Left colon (tissue), 2 donors: ENCODE measurements at regions of chr7 and their contacts with region 1.

Region 1: GRCh38 chr7:146591976-146592375 is 475.4 kb downstream of the CNTNAP2 start:
- DNase-seq: no peak
- ATAC-seq: no peak

Region 2: DNA sequence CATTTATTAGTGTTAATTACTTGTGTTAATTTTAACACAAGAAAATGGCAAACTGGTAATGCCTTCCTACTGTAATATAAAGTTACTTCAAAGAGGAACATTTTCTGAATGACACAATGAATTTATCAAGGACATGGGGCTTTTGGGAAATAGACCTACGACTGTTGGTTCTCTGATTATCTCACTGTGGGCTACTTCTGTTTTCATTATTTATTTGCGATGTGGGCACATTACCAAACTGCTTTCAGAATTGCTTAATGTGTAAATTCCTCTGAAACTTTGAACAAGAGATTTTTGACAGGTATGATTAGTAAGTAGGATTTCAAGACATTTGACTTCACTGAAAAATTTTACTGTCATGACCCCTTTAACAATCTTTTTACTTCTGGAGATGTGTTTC is 60.2 kb after region 1 on chr7:
- intact Hi-C with region 1: no loop called
- DNase-seq: no peak
- ATAC-seq: no peak

Region 3: GRCh38 chr7:146736446-146737190 is 144.6 kb after region 1 on chr7:
- intact Hi-C with region 1: no loop called
- DNase-seq: no peak
- ATAC-seq: no peak

Region 4: DNA sequence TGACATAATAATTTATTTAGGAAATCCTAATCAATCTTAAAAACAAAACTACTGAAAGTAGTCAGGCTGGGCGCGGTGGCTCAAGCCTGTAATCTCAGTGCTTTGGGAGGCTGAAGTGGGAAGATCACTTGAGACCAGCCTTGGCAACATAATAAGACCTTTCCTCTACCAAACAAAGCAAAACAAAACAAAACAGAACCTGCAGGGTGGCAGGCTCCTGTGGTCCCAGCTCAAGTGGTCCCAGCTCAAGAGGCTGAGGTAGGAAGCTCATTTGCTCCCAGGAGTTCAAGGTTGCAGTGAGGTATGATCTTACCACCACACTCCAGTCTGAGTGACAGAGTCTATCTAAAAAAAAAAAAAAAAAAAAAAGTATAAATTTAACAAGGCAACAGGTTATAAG is 272.7 kb after region 1 on chr7:
- intact Hi-C with region 1: loop called in 1 of 2 experiments (anchors 5 kb)
- DNase-seq: no peak
- ATAC-seq: no peak